Stomach (tissue), 19 donors: ENCODE measurements at regions of chr20 and their contacts with region 1.

Region 1: DNA sequence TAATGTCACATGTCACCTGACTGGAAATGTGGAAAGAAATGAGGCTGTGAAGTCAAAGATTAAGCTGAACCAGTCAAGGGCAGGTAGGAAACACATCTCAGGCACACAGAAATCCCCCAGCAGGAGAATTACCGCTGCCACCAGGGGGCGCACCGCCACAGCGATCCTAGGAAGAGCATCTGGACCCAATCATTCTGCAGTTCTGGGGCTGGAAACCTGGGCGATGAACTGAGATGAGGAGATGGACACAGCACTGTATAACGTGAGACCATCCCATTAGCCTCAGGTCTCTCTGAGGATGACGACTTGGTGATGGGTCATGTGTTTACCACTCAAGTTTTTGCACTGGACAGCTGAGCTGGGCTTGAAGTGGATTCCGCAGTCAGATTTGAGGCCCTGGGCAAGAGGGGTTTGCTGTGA is 6.5 kb upstream of the SLC24A3 start:
- DNase-seq: peak; percentile 83 to 86
- H3K4me3 ChIP-seq: no peak overlapping the region
- H3K27ac ChIP-seq: no peak overlapping the region
- H3K4me1 ChIP-seq: peaks cover 0 to 11% (median 5%) of the 10 kb centered on the region in 4 donors
- H3K27me3 ChIP-seq: peaks cover 0 to 6% (median 0%) of the 10 kb centered on the region in 3 donors
- CTCF ChIP-seq: peak in 5 of 7 experiments; percentile 62 to 94 (median 88)
- EP300 ChIP-seq: no peak
- POLR2A ChIP-seq: no peak

Region 2: GRCh38 chr20:19583532-19584175 is 377.7 kb after region 1 on chr20:
- intact Hi-C with region 1: loop called (anchors 5 kb)
- DNase-seq: peak; percentile 85
- H3K4me3 ChIP-seq: no peak overlapping the region
- H3K27ac ChIP-seq: no peak overlapping the region
- H3K4me1 ChIP-seq: peaks cover 0 to under 1% (median 0%) of the 10 kb centered on the region in 4 donors
- H3K27me3 ChIP-seq: no peaks in the 10 kb centered on the region
- CTCF ChIP-seq: peak in 6 of 7 experiments; percentile 10 to 89 (median 80)
- EP300 ChIP-seq: no peak
- POLR2A ChIP-seq: no peak